CD8-positive, alpha-beta T cell (primary cell): ENCODE measurements at regions of chr14 and their contacts with region 1.

Region 1: DNA sequence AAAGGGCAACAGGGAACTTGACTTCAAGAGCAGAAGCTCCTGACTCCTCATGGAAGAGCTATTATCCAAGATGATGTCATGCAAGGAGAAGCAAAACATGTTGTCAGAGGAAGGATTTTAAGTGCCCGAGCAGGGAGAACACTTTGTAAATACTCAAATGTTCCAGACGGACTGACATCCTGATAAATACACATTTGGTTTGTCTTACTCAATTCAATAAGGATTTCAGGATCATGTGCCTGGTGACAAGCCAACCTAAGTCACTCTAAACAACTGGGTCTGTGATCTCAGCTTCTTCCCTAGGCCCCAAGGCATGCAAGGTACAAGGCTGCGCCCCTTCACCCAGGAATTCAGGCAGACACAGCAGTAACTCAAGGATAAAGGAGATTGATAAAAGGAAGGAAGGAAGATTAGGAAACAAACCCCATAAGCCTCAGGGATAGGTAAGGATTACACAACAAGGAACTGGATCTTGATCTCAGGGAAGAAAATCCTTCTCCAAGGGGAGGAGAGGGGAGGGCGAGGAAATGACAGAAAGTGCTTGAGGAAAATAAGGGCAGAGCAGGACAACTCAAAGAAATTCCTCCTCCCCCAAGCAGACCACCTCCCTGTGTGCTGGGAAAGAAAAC is 26.9 kb upstream of the CEBPE start:
- DNase-seq: no peak
- ATAC-seq: no peak
- H3K4me3 ChIP-seq: no peak overlapping the region
- H3K4me3 Mint-ChIP-seq: no peak overlapping the region
- H3K27ac ChIP-seq: no peak overlapping the region
- H3K27ac Mint-ChIP-seq: no peak overlapping the region
- H3K4me1 ChIP-seq: no peaks in the 10 kb centered on the region
- H3K4me1 Mint-ChIP-seq: no peaks in the 10 kb centered on the region
- H3K27me3 ChIP-seq: no peaks in the 10 kb centered on the region
- H3K27me3 Mint-ChIP-seq: peaks cover 18% of the 10 kb centered on the region
- CTCF ChIP-seq: no peak

Region 2: DNA sequence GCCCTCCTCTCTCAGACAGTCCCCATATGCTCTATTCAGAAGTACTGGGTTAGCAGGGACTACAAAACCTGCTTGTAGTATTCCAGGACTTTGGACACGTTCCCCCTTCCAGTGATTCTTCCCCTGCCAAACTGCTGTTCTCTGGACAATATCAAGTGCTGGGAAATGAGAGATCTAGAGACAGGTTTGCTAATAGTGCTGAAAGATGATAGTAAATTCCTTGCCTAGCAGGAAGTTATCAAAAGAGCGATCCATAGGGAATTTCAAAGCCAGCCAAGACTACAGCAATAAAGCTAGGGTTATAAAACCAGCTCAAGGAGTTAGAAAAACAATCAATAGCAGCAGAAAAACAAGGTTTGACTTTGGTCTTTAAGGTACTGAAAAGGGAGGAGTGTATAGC is 22.3 kb after region 1 on chr14:
- CTCF ChIA-PET with region 1: interaction called, 4 read pairs
- POLR2A ChIA-PET with region 1: no interaction called
- intact Hi-C with region 1: loop called in 1 of 2 experiments (anchors 1 kb)
- DNase-seq: no peak
- ATAC-seq: no peak
- H3K4me3 ChIP-seq: no peak overlapping the region
- H3K4me3 Mint-ChIP-seq: no peak overlapping the region
- H3K27ac ChIP-seq: no peak overlapping the region
- H3K27ac Mint-ChIP-seq: no peak overlapping the region
- H3K4me1 ChIP-seq: peaks cover 26% of the 10 kb centered on the region
- H3K4me1 Mint-ChIP-seq: peaks cover 29% of the 10 kb centered on the region
- H3K27me3 ChIP-seq: no peaks in the 10 kb centered on the region
- H3K27me3 Mint-ChIP-seq: no peaks in the 10 kb centered on the region
- CTCF ChIP-seq: no peak

Region 3: DNA sequence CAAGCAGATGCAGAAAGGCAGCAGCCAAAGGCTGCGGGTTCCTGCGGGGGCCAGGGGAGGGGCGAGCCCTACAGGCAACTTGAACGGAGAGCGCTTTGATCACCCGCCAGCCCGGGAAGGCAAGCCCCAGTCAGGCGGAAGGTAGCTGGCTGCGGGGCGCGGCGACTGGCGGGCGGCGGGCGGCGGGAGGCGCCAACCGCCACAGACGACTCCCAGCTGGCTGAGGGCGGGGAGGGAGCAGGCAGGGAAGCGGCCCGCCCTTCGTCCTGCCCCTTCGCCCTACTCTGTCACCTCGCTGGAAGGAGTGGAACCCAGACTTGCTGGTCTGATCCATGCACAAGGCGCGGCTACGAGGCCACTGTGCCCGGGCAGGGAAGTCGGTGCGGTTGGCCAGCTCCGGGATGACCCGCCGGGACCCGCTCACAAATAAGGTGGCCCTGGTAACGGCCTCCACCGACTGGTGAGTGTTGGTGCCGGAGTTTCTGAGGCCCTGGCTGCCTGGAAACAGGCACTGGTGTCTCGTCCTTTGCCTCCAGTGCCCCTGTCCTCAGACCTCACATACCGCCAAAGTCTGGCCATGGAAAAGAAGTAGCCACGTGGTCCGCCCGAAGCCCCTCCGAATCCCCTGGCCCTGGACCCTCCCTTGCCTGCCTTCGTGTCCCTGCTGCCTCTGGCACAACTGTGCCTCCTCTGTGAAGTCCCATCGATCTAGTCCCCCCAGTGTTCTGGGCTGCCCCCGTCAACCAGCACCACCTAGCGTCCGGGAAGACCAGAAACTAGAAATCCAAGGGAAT is 890.5 kb after region 1 on chr14:
- CTCF ChIA-PET with region 1: no interaction called
- POLR2A ChIA-PET with region 1: no interaction called
- intact Hi-C with region 1: no loop called
- DNase-seq: peak; percentile 29 to 79 (median 69)
- ATAC-seq: peak; percentile 79
- H3K4me3 ChIP-seq: peak overlapping the region; percentile 69 to 87
- H3K4me3 Mint-ChIP-seq: peak overlapping the region; percentile 89
- H3K27ac ChIP-seq: peak overlapping the region; percentile 40 to 66
- H3K27ac Mint-ChIP-seq: peak overlapping the region; percentile 83
- H3K4me1 ChIP-seq: no peaks in the 10 kb centered on the region
- H3K4me1 Mint-ChIP-seq: peaks cover 9% of the 10 kb centered on the region
- H3K27me3 ChIP-seq: no peaks in the 10 kb centered on the region
- H3K27me3 Mint-ChIP-seq: no peaks in the 10 kb centered on the region
- CTCF ChIP-seq: peak; percentile 64